B cell (primary cell): ENCODE measurements at regions of chr19 and their contacts with region 1.

Region 1: DNA sequence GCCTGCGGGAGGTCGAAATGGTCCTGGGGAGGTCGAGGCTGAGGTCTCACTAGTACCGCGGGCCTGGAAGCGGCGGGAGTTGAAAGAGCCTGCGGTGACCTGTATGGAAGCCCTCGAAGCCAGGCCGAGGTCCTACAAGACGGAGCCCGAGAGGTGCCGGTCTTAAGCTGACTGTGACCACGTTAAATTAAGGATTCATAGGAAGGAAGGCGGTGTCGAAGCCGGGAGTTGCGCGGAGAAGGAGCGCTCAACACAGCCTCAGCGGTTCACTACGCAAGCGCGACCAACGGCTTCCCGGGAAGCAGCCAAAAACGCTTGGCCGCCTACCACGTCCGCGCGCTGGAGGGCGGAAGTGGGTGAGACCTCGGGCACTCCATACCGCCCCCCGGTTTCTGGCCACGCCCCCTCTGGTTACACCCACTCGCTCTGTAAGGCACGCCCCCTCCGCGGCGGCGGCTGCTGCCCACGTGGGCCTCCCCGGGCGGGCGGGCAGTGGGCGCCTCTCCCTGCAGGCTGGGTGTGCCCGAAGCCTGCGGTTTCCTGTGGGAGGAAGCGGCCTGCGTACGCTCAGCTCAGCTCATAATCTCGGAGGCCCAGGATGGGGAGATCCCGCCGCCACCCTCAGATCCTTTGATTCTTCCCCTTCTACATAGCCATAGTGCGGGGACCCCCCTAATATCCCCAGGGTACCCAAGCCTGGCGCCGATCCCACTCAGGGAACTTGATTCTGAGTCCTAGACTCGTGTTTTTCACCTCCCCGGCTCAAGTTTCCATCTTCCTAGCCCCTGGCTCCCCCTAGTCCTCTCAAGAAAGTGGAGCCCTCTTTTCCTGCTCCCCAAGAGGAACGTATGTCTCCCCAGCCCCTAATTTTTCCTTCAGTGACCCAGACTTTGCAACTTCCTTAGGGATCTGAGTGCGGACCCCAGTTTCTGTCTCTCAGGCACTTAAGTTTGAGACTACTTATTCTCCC is 3.4 kb upstream of the EMP3 start:
- DNase-seq: peak; percentile 99
- ATAC-seq: peak; percentile 67
- H3K4me3 ChIP-seq: peak overlapping the region; percentile 67 to 96 (median 81)
- H3K4me3 Mint-ChIP-seq: peak overlapping the region; percentile 97
- H3K27ac ChIP-seq: peak overlapping the region; percentile 95 to 100
- H3K27ac Mint-ChIP-seq: peak overlapping the region; percentile 100
- H3K4me1 ChIP-seq: peaks cover 46 to 61% of the 10 kb centered on the region in 2 donors
- H3K4me1 Mint-ChIP-seq: peaks cover 51% of the 10 kb centered on the region
- H3K27me3 ChIP-seq: no peaks in the 10 kb centered on the region
- H3K27me3 Mint-ChIP-seq: no peaks in the 10 kb centered on the region
- CTCF ChIP-seq: no peak

Region 2: GRCh38 chr19:48170038-48170812 is 151.7 kb before region 1 on chr19 and contains the starts of genes LIG1 and ZSWIM9:
- CTCF ChIA-PET with region 1: interaction called, 3 read pairs
- POLR2A ChIA-PET with region 1: interaction called, 3 read pairs
- intact Hi-C with region 1: loop called (anchors 2 kb)
- DNase-seq: peak; percentile 97
- ATAC-seq: peak; percentile 80
- H3K4me3 ChIP-seq: peak within 1 kb of the TSS; percentile 41 to 99 (median 90)
- H3K4me3 Mint-ChIP-seq: peak within 1 kb of the TSS; percentile 96
- H3K27ac ChIP-seq: peak within 1 kb of the TSS; percentile 86 to 87
- H3K27ac Mint-ChIP-seq: peak within 1 kb of the TSS; percentile 98
- H3K4me1 ChIP-seq: peaks cover 10 to 15% of the 10 kb centered on the region in 2 donors
- H3K4me1 Mint-ChIP-seq: peaks cover 25% of the 10 kb centered on the region
- H3K27me3 ChIP-seq: no peaks in the 10 kb centered on the region
- H3K27me3 Mint-ChIP-seq: no peaks in the 10 kb centered on the region
- CTCF ChIP-seq: no peak
- total RNA-seq, gene LIG1: 111 and 116 TPM in 2 replicates
- total RNA-seq, gene ZSWIM9: 11.8 and 15.7 TPM in 2 replicates

Region 3: DNA sequence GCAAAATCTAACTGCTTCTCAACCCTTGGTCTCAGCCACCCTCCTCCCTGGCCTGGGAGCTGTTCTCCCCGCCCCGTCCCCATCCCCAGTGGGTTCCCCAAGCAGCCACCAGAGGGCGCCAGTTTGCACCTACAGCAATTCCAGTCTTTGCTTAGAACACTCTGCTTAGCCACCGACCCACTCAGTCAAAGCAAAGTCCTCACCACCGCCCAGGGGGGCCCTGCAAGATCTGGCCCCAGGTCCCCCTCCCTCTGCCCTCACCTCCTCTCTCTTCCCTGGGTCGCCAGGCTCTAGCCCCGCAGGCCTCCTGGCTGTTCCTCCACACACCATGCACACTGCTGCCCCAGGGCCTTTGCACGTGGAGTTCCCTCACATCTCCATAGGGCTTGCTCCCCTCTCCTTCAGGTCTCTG is 29.4 kb after region 1 on chr19:
- CTCF ChIA-PET with region 1: interaction called, 4 read pairs
- POLR2A ChIA-PET with region 1: no interaction called
- intact Hi-C with region 1: loop called (anchors 1 kb)
- DNase-seq: peak; percentile 76
- ATAC-seq: peak; percentile 79
- H3K4me3 ChIP-seq: no peak overlapping the region
- H3K4me3 Mint-ChIP-seq: no peak overlapping the region
- H3K27ac ChIP-seq: no peak overlapping the region
- H3K27ac Mint-ChIP-seq: peak overlapping the region; percentile 22
- H3K4me1 ChIP-seq: peaks cover 0 to 5% of the 10 kb centered on the region in 2 donors
- H3K4me1 Mint-ChIP-seq: peaks cover 3% of the 10 kb centered on the region
- H3K27me3 ChIP-seq: no peaks in the 10 kb centered on the region
- H3K27me3 Mint-ChIP-seq: no peaks in the 10 kb centered on the region
- CTCF ChIP-seq: peak; percentile 74

Region 4: GRCh38 chr19:48403606-48404005 is 81.7 kb after region 1 on chr19:
- CTCF ChIA-PET with region 1: no interaction called
- POLR2A ChIA-PET with region 1: no interaction called
- intact Hi-C with region 1: loop called (anchors 1 kb)
- DNase-seq: peak; percentile 68
- ATAC-seq: peak; percentile 56
- H3K4me3 ChIP-seq: no peak overlapping the region
- H3K4me3 Mint-ChIP-seq: no peak overlapping the region
- H3K27ac ChIP-seq: no peak overlapping the region
- H3K27ac Mint-ChIP-seq: peak overlapping the region; percentile 43
- H3K4me1 ChIP-seq: peaks cover 0 to 4% of the 10 kb centered on the region in 2 donors
- H3K4me1 Mint-ChIP-seq: peaks cover 14% of the 10 kb centered on the region
- H3K27me3 ChIP-seq: peaks cover 0 to 15% (median 5%) of the 10 kb centered on the region in 4 experiments
- H3K27me3 Mint-ChIP-seq: peaks cover 18% of the 10 kb centered on the region
- CTCF ChIP-seq: no peak

Region 5: GRCh38 chr19:48513289-48514122 is 191.6 kb after region 1 on chr19:
- CTCF ChIA-PET with region 1: interaction called, 4 read pairs
- POLR2A ChIA-PET with region 1: no interaction called
- intact Hi-C with region 1: loop called (anchors 5 kb)
- DNase-seq: peak; percentile 78
- ATAC-seq: peak; percentile 84
- H3K4me3 ChIP-seq: peak overlapping the region; percentile 21 to 82 (median 73)
- H3K4me3 Mint-ChIP-seq: no peak overlapping the region
- H3K27ac ChIP-seq: no peak overlapping the region
- H3K27ac Mint-ChIP-seq: no peak overlapping the region
- H3K4me1 ChIP-seq: peaks cover 28 to 30% of the 10 kb centered on the region in 2 donors
- H3K4me1 Mint-ChIP-seq: peaks cover 15% of the 10 kb centered on the region
- H3K27me3 ChIP-seq: peaks cover 0 to 37% (median 14%) of the 10 kb centered on the region in 4 experiments
- H3K27me3 Mint-ChIP-seq: peaks cover 15% of the 10 kb centered on the region
- CTCF ChIP-seq: no peak

Region 6: GRCh38 chr19:48637170-48637947 is 315.5 kb after region 1 on chr19 and contains the start of gene DBP:
- CTCF ChIA-PET with region 1: interaction called, 3 read pairs
- POLR2A ChIA-PET with region 1: interaction called, 5 read pairs
- intact Hi-C with region 1: loop called (anchors 5 kb)
- DNase-seq: peak; percentile 100
- ATAC-seq: peak; percentile 68
- H3K4me3 ChIP-seq: peak within 1 kb of the TSS; percentile 74 to 98 (median 88)
- H3K4me3 Mint-ChIP-seq: peak within 1 kb of the TSS; percentile 96
- H3K27ac ChIP-seq: peak within 1 kb of the TSS; percentile 89 to 94
- H3K27ac Mint-ChIP-seq: peak within 1 kb of the TSS; percentile 100
- H3K4me1 ChIP-seq: peaks cover 40 to 41% of the 10 kb centered on the region in 2 donors
- H3K4me1 Mint-ChIP-seq: peaks cover 55% of the 10 kb centered on the region
- H3K27me3 ChIP-seq: no peaks in the 10 kb centered on the region
- H3K27me3 Mint-ChIP-seq: no peaks in the 10 kb centered on the region
- CTCF ChIP-seq: no peak
- total RNA-seq, gene DBP: 33.0 and 33.2 TPM in 2 replicates